Left cardiac atrium (tissue), 4 donors: ENCODE measurements at regions of chr11 and their contacts with region 1.

Region 1: DNA sequence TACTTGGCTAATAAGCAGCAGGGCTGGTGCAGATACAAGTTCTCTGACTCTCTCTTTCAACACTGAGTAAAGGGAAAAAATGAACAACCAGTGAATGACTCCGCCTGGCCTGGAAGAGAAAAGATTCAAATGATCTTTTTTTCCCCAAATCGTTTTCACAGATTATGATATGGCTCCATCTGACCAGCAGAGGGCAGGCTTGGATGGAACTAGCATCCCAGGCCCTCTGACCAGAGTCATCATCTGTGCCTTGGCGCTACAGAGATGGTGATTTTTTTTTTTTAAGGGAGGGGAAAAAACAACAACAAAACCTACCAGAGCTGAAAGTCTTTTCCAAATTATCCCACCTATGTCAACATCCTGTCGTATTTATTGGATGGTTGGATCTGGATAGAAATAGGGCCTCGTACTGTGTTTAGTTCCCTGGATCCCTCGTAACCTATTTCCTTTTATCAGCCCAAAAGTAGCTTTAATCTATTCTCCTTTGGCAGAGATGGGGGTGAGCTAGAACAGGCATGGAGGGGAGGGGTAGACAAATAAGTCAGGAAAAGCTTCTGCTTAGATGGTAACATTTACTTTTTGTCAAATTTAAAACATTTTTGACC is 69.7 kb downstream of the PRSS23 start:
- DNase-seq: peak; percentile 72
- ATAC-seq: peak; percentile 87 to 88

Region 2: GRCh38 chr11:86919557-86920210 is 49.6 kb after region 1 on chr11:
- intact Hi-C with region 1: loop called (anchors 1 to 5 kb)
- DNase-seq: no peak
- ATAC-seq: peak; percentile 36 to 62

Region 3: GRCh38 chr11:87290304-87290922 is 420.3 kb after region 1 on chr11:
- intact Hi-C with region 1: loop called (anchors 5 to 10 kb)
- DNase-seq: no peak
- ATAC-seq: peak in 1 of 2 donors; percentile 32

Region 4: GRCh38 chr11:87421422-87421821 is 551.4 kb after region 1 on chr11:
- intact Hi-C with region 1: loop called in 1 of 2 experiments (anchors 10 kb)
- DNase-seq: no peak
- ATAC-seq: peak; percentile 83 to 86